ENCODE measurements at regions of chr4 and their contacts with region 1.

Region 1: GRCh38 chr4:87961993-87962392 is 13.5 kb upstream of the SPP1 start:
- DNase-seq: peak; percentile 52
- H3K4me3 ChIP-seq: no peak overlapping the region
- H3K27ac ChIP-seq: no peak overlapping the region
- H3K4me1 ChIP-seq: peaks cover 6% of the 10 kb centered on the region
- H3K27me3 ChIP-seq: no peaks in the 10 kb centered on the region
- CTCF ChIP-seq: no peak

Region 2: DNA sequence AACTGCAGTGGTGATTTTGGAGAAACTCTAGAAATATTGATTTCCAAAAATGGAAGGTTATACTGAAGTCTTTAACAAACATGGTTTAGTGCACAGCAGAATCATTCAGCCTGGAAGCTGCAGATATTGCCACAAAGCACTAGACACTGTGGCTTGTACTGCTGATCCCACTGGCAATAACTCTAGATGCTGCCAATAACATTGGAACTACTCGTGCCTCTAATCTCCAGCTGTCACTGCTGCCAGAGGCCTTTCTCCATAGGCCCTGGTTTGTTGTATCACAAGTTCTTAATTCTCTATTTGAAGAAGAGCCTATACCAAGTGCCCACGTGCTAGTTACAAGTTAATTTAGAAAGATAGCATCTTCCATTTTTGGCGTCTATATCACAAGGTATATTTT is 292.6 kb before region 1 on chr4:
- CTCF ChIA-PET with region 1: no interaction called
- dilution Hi-C with region 1: no loop called
- in situ Hi-C with region 1: no loop called
- intact Hi-C with region 1: no loop called
- DNase-seq: no peak
- H3K4me3 ChIP-seq: no peak overlapping the region
- H3K27ac ChIP-seq: no peak overlapping the region
- H3K4me1 ChIP-seq: no peaks in the 10 kb centered on the region
- H3K27me3 ChIP-seq: no peaks in the 10 kb centered on the region
- CTCF ChIP-seq: no peak

Region 3: GRCh38 chr4:87863486-87863885 is 98.5 kb before region 1 on chr4:
- CTCF ChIA-PET with region 1: no interaction called
- dilution Hi-C with region 1: loop called (anchors 5 kb)
- in situ Hi-C with region 1: no loop called
- intact Hi-C with region 1: no loop called
- DNase-seq: no peak
- H3K4me3 ChIP-seq: no peak overlapping the region
- H3K27ac ChIP-seq: no peak overlapping the region
- H3K4me1 ChIP-seq: peaks cover 4% of the 10 kb centered on the region
- H3K27me3 ChIP-seq: no peaks in the 10 kb centered on the region
- CTCF ChIP-seq: no peak

Region 4: DNA sequence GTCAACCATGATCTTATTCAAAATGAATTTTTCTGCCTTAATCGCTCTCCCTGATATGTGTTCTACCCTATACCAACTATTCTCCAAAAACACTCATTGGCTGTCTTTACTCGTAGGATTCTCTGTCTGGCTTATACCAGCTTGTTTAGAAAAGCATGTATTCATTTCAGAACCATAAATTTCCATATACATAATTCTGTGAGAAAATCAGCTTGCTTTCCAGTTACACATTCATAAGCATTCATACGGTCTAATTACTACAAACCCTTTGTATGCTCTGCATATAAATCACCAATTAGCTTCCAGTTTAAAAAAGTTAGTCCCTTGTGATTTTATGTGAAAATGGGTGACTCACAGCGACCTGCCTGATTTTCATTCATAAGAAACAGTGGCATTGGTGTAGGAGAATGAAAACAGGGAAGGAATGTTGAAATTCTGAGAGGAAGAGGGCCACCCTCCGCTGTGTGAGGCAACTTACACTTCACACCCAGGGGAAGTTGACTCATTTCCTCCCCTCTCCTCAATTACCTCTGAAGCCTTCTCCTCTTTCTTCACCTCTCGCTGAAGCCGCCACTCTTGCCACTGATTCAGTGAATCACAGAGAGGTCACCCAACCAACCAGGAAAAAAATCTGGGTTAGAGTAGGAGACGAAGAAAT is 65.9 kb before region 1 on chr4:
- CTCF ChIA-PET with region 1: no interaction called
- dilution Hi-C with region 1: no loop called
- in situ Hi-C with region 1: no loop called
- intact Hi-C with region 1: no loop called
- DNase-seq: peak; percentile 91
- H3K4me3 ChIP-seq: no peak overlapping the region
- H3K27ac ChIP-seq: peak overlapping the region; percentile 43
- H3K4me1 ChIP-seq: peaks cover 15% of the 10 kb centered on the region
- H3K27me3 ChIP-seq: no peaks in the 10 kb centered on the region
- CTCF ChIP-seq: no peak